Activated T-helper 2 cell treated with anti-CD3 and anti-CD28 coated beads, Interferon-gamma antibody, Interleukin-2, Interleukin-4, amounts not matched to agents 10 μg/mL and 5 μg/mL and 100 μg/mL, durations not matched to agents 14 hours and 24 hours and 36 hours (primary cell): ENCODE measurements at regions of chr10 and their contacts with region 1.

Region 1: DNA sequence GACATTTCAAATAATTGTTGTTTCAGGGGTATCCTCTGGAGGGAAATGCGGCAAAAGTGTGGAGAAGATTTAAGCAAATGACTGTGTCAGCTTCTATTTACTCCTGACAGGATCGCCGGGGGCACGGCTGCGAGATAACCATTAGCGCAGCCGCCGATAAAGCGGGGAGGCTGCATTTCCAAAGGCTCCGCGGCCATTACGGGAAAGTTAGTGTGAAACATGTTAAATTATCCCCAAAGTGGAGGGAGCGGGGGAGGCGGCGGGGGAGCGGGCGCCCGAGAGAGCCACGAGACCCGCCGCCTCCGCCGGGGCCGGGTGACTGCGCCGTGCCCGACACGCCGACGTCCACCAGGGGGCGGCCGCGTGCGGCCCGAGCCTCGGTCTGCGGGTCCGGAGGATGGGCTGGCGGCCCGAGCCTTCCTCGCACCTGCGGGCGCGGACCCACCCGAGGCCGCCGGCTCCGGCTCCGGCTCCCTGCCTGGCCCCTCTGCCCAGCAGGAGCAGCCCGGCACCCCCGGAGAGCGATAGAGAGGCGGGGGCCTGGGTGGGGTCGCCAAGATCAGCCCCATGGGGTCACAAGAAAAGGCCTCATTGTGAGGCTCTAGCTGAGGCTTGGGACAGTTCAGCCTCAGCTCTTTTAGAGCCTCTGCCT is 74.4 kb upstream of the PAX2 start:
- DNase-seq: peak; percentile 54
- H3K4me3 Mint-ChIP-seq: peak overlapping the region; percentile 39
- H3K27ac Mint-ChIP-seq: no peak overlapping the region
- H3K4me1 Mint-ChIP-seq: peaks cover 3% of the 10 kb centered on the region
- H3K27me3 Mint-ChIP-seq: peaks cover 49% of the 10 kb centered on the region

Region 2: DNA sequence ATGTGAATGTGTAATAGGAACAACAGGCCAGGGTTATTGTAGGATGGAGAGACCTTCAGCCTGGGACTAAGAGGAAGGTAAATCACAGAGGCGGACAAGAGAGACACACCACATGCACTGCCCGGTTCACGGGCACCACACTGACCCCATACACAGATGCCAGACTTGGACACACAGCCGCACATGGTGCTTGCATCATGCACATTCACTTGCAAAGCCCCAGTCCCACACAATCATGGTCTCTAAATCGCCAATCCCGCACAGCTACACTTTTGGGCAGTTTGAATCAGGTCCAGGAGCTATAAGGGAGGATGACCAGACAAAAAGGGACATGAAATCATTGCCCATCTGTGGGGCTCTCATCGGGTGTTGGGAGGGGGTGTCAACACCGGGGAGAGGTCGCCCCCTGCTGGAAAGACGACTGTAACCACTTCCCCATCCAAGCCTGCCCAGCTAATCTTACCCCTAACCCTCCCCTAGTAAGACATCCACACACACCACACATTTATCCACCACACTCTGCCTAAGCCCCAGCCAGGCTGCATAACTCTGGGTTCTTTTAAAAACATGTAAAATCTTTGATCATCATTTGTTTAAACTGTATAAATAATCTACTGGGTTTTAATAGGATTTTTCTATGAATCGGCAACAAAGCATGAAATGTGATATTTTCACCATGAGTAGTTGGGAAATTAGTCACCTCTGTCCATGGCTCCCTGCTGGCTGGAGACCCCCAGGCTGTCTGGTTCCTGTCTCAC is 201.3 kb after region 1 on chr10:
- intact Hi-C with region 1: loop called (anchors 5 kb)
- DNase-seq: peak; percentile 32
- H3K4me3 Mint-ChIP-seq: no peak overlapping the region
- H3K27ac Mint-ChIP-seq: no peak overlapping the region
- H3K4me1 Mint-ChIP-seq: no peaks in the 10 kb centered on the region
- H3K27me3 Mint-ChIP-seq: peaks cover 15% of the 10 kb centered on the region

Region 3: GRCh38 chr10:101071267-101071884 is 400.4 kb after region 1 on chr10:
- intact Hi-C with region 1: no loop called
- DNase-seq: no peak
- H3K4me3 Mint-ChIP-seq: no peak overlapping the region
- H3K27ac Mint-ChIP-seq: no peak overlapping the region
- H3K4me1 Mint-ChIP-seq: peaks cover 13% of the 10 kb centered on the region
- H3K27me3 Mint-ChIP-seq: peaks cover 53% of the 10 kb centered on the region